Breast epithelium (tissue), 4 donors: ENCODE measurements at regions of chr20 and their contacts with region 1.

Region 1: GRCh38 chr20:51148941-51149340 is 126.0 kb upstream of the KCNG1 start:
- DNase-seq: no peak
- H3K4me3 ChIP-seq: no peak overlapping the region
- H3K27ac ChIP-seq: no peak overlapping the region
- H3K4me1 ChIP-seq: no peaks in the 10 kb centered on the region
- H3K27me3 ChIP-seq: no peaks in the 10 kb centered on the region
- CTCF ChIP-seq: no peak
- POLR2A ChIP-seq: no peak

Region 2: GRCh38 chr20:51125780-51126179 is 23.2 kb before region 1 on chr20:
- intact Hi-C with region 1: loop called (anchors 2 kb)
- DNase-seq: no peak
- H3K4me3 ChIP-seq: no peak overlapping the region
- H3K27ac ChIP-seq: no peak overlapping the region
- H3K4me1 ChIP-seq: no peaks in the 10 kb centered on the region
- H3K27me3 ChIP-seq: peaks cover 0 to 3% of the 10 kb centered on the region in 2 donors
- CTCF ChIP-seq: no peak
- POLR2A ChIP-seq: no peak